Prostate gland (tissue), 2 donors: ENCODE measurements at regions of chrX and their contacts with region 1.

Region 1: DNA sequence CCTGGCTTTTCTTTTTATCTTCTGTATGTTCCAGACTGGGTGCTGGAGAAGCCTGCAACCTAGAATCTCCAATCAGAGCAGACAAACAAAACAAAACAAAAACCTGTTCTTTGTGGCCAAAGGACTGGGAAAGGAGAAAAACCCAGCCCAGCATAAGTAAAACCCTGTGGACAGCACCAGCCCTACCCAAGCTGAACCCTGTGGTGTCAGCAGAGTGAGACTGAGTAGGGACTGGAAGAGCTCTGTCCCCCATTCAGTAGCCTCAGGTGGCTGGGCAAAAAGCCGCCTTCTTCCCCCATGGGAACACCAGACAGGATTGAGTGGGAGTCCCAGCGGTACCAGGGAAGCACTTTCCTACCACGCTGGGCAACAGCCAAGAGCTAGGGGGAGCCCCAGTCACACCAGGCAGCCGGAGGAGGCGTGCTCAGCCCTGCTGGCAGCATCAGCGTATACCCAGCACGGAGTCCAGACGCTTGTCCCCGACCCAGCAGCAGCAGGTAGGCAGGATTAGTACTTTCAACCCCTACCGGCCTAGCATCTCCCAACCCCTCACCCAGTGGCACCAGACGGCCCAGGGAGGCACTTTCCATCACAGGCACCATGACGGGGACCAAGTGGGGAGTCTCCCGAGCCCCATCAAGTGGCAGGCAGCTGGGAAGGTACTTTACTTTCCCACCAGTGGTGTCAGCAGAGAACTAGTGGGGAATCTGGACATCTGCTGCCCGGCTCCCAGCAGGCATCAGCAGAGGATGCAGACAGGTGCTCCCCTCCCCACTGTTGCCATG is 8.6 kb upstream of the JADE3 start:
- DNase-seq: peak; percentile 75
- H3K4me3 ChIP-seq: peak overlapping the region; percentile 25 to 28
- H3K27ac ChIP-seq: no peak overlapping the region
- H3K4me1 ChIP-seq: no peaks in the 10 kb centered on the region
- H3K27me3 ChIP-seq: no peaks in the 10 kb centered on the region
- CTCF ChIP-seq: peak in 3 of 4 experiments; percentile 59 to 81 (median 78)
- POLR2A ChIP-seq: no peak

Region 2: DNA sequence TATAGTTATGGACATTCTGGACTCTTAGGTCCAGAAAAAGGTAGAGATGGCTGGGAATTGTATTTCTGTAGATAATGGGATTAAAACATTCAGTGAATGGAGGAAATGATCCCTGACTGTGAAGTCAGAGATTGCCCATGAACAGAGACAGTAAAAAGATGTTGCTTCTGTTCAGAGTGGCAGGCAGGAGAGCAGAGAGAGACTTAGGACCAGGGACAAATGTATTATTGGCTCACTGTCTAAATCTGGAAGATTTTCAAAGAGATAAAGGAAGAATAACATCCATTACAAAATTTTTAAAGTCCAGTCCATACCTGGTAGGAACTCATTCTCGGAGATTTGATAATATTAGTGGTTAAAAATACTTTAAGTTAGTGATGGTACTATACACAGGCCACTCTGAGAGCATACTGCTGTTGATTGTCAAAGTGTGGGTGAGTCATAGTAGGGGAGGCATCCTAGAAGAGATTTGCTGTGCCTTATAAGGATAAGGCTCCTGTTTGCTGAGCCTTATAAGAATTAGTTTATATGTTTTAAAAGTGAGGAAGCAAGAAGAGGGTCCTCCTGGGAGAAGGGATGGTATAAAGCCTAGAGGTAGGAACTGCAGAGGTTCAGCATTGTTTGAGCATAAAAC is 61.6 kb after region 1 on chrX:
- intact Hi-C with region 1: no loop called
- DNase-seq: no peak
- H3K4me3 ChIP-seq: no peak overlapping the region
- H3K27ac ChIP-seq: no peak overlapping the region
- H3K4me1 ChIP-seq: no peaks in the 10 kb centered on the region
- H3K27me3 ChIP-seq: no peaks in the 10 kb centered on the region
- CTCF ChIP-seq: no peak
- POLR2A ChIP-seq: no peak

Region 3: GRCh38 chrX:47030339-47030738 is 126.7 kb after region 1 on chrX:
- intact Hi-C with region 1: loop called (anchors 5 kb)
- DNase-seq: peak; percentile 39
- H3K4me3 ChIP-seq: no peak overlapping the region
- H3K27ac ChIP-seq: no peak overlapping the region
- H3K4me1 ChIP-seq: no peaks in the 10 kb centered on the region
- H3K27me3 ChIP-seq: no peaks in the 10 kb centered on the region
- CTCF ChIP-seq: peak; percentile 22 to 62 (median 52)
- POLR2A ChIP-seq: no peak

Region 4: GRCh38 chrX:47093248-47093647 is 189.6 kb after region 1 on chrX:
- intact Hi-C with region 1: loop called (anchors 5 kb)
- DNase-seq: no peak
- H3K4me3 ChIP-seq: no peak overlapping the region
- H3K27ac ChIP-seq: no peak overlapping the region
- H3K4me1 ChIP-seq: no peaks in the 10 kb centered on the region
- H3K27me3 ChIP-seq: no peaks in the 10 kb centered on the region
- CTCF ChIP-seq: peak in 3 of 4 experiments; percentile 21 to 54 (median 45)
- POLR2A ChIP-seq: no peak